ENCODE measurements at regions of chr19 and their contacts with region 1.

Region 1: GRCh38 chr19:52094526-52095130 is 937 bp downstream of the ZNF841 start:
- DNase-seq: no peak
- ATAC-seq: peak; percentile 18 to 56 (median 34)
- H3K4me3 ChIP-seq: peak overlapping the region; percentile 68 to 88 (median 76)
- H3K27ac ChIP-seq: peak overlapping the region in 1 of 4 donors; percentile 71
- H3K4me1 ChIP-seq: peaks cover 0 to 4% (median 0%) of the 10 kb centered on the region in 3 donors
- H3K27me3 ChIP-seq: no peaks in the 10 kb centered on the region
- CTCF ChIP-seq: no peak

Region 2: DNA sequence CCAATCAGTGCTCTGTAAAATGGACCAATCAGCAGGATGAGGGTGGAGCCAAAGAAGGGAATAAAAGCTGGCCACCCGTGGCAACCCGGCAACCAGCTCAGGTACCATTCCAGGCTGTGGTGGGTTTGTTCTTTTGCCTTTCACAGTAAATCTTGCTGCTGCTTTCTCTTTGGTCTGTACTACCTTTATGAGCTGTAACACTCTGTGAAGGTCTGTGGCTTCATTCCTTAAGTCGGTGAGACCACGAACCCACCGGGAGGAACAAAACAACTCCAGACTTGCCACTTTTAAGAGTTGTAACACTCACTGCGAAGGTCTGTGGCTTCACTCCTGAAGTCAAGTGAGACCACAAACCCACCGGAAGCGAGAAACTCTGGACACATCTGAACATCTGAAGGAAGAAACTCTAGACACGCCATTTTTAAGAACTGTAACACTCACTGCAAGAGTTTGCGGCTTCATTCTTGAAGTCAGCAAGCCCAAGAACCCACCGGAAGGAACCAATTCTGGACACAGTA is 418.0 kb before region 1 on chr19:
- intact Hi-C with region 1: no loop called
- DNase-seq: no peak
- ATAC-seq: no peak
- H3K4me3 ChIP-seq: no peak overlapping the region
- H3K27ac ChIP-seq: no peak overlapping the region
- H3K4me1 ChIP-seq: no peaks in the 10 kb centered on the region
- H3K27me3 ChIP-seq: no peaks in the 10 kb centered on the region
- CTCF ChIP-seq: no peak

Region 3: DNA sequence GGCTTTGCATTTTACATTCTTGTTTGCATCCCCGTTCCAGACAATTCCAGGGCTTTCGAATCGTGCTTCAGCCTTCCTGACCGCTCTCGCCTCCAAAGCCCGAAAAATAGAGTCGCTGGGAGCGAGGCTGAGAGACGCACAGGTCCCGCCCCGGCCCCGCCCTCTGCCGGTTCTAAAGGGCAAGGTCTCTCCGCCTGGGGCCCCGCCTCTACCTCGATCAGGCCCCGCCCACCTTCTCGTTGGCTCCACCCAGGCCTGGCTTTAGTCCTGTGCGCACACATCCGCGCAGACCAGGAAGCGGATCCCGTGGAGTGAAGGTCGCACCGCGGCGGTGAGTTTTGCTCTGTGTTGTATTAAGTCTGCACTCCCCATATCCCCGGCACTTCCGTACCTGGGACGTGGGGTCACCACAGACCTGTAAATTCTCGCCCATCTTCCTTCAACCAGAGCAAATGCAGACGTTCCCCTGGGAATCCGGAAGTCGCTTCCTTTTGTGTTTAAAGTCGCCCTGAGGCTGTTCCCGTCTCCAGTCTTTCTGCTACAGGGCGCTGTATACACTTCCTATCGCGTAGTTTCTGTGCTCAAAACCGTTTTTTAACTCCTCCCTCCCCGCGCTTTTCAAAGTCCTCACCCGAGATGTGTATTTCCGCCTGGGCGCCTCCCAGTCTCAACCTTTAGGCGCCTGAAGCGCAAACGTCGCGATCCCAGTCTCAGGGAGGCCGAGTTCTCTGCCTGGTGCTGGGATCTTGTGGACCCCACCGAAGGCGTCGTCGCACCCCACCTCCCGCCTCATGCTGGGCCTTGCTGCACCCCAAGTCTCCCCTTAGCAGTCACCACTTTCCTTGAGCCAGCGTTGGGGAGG is 475.6 kb after region 1 on chr19 and contains the start of gene ZNF701:
- intact Hi-C with region 1: loop called in 1 of 3 experiments (anchors 5 kb)
- DNase-seq: peak; percentile 87 to 98 (median 96)
- ATAC-seq: peak; percentile 99 to 100 (median 100)
- H3K4me3 ChIP-seq: peak within 1 kb of the TSS; percentile 53 to 80 (median 62)
- H3K27ac ChIP-seq: peak within 1 kb of the TSS; percentile 64 to 78 (median 68)
- H3K4me1 ChIP-seq: no peaks in the 10 kb centered on the region
- H3K27me3 ChIP-seq: no peaks in the 10 kb centered on the region
- CTCF ChIP-seq: peak in 3 of 4 donors; percentile 9 to 32 (median 17)
- total RNA-seq, gene ZNF701: 4.6 to 13.6 (median 7.4) TPM